ENCODE measurements at regions of chr4 and their contacts with region 1.

Region 1: DNA sequence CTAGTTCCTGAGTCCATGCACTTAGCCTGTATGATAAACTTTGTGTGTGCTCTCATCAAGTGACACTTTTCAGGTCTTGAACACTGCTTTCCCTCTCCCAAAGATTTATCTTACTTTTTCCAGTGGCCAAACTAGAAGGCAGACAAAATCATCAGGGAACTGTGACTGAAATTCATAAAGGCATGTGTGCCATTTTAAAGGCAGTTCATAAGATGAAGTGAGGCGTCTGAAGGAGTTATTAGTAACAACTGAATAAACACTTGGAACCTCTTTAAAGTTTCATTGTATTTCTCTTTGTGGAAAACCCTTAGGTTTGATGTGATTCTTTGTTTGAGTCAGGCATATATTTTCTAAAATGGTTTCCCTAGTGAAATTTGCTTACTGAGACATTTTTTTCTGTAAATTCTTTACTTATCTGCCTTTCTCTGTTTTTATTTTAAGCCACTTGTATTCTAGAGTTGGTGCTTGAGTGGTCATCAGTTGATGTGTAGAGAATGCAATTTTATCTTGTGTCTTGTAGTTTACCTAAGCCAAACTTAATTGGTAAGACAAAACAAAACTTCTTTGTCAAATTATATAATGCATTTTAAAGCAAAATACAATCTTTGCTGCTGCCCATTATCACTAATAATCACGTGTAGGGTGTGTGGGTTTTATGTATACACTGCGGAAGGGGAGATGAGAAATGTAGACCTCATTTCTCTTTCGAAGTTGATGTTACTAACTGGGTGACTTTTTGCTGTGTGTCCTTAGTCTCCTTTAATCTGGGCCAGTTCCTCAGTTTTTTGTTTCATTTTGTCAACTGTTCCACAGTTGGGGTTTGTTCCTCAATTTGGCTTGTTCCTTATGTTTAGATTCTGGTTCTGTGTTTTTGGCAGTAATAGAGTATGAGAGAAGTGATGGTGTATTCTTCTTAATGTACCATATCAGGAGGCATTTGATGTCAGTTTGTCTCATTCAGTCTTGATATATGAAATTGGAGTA is 56.8 kb downstream of the RBPJ start:
- DNase-seq: no peak
- H3K4me3 ChIP-seq: no peak overlapping the region
- H3K27ac ChIP-seq: peak overlapping the region in 27 of 59 donors; percentile 2 to 92 (median 38)
- H3K27me3 ChIP-seq: no peaks in the 10 kb centered on the region
- CTCF ChIP-seq: no peak

Region 2: GRCh38 chr4:26342328-26343037 is 35.1 kb before region 1 on chr4:
- intact Hi-C with region 1: loop called in 1 of 2 experiments (anchors 5 kb)
- DNase-seq: no peak
- H3K4me3 ChIP-seq: peak overlapping the region in 43 of 59 donors; percentile 8 to 73 (median 47)
- H3K27ac ChIP-seq: peak overlapping the region; percentile 58 to 99 (median 94)
- H3K27me3 ChIP-seq: no peaks in the 10 kb centered on the region
- CTCF ChIP-seq: no peak

Region 3: DNA sequence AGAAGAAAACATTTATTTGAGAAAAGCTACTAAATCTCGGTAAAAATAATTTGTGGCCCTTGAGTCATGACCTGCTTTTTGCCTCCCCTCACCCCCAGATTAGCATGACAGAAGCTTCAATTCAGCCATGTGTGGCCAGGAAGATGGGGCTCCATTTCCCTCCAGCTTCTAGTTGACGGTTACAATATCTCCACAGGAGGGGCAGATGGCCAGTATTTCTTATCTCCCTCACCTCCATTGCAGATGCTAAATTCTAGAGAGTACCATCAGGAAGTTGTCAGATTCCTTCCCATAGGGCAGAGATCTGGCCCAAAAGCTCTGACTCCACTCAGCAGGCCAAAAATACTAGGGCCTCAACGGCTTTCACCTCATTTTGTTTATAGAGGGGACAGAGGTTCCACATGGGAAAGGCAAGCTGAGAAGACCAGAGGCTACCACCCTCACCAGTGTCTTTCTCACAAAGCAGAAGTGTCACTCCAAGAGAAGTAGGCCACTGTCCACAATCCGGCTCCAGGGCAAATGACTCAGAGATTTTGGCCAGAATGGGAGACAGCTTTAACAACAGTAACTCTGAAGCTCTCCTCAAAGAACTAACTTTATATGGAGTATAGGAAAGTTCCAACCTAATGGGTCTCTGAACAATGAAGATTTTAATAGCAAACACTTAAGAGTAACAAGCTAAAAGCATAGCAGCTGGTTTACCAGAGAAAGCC is 314.6 kb after region 1 on chr4:
- intact Hi-C with region 1: no loop called
- DNase-seq: no peak
- H3K4me3 ChIP-seq: no peak overlapping the region
- H3K27ac ChIP-seq: no peak overlapping the region
- H3K27me3 ChIP-seq: no peaks in the 10 kb centered on the region
- CTCF ChIP-seq: no peak

Measured in dorsolateral prefrontal cortex (tissue), 120 donors.